WTC11 (cell line): ENCODE measurements at regions of chr7 and their contacts with region 1.

Region 1: GRCh38 chr7:25093268-25093826 is 31.7 kb downstream of the CYCS start:
- DNase-seq: peak; percentile 88
- ATAC-seq: peak; percentile 84
- H3K4me3 Mint-ChIP-seq: no peak overlapping the region
- H3K27ac Mint-ChIP-seq: no peak overlapping the region; the same call in 1 of the 2 replicates
- H3K4me1 Mint-ChIP-seq: peaks cover 8% of the 10 kb centered on the region
- H3K27me3 Mint-ChIP-seq: no peaks in the 10 kb centered on the region; the same call in 1 of the 2 replicates
- CTCF ChIP-seq: peak; percentile 49; the same call in 1 of the 2 replicates

Region 2: DNA sequence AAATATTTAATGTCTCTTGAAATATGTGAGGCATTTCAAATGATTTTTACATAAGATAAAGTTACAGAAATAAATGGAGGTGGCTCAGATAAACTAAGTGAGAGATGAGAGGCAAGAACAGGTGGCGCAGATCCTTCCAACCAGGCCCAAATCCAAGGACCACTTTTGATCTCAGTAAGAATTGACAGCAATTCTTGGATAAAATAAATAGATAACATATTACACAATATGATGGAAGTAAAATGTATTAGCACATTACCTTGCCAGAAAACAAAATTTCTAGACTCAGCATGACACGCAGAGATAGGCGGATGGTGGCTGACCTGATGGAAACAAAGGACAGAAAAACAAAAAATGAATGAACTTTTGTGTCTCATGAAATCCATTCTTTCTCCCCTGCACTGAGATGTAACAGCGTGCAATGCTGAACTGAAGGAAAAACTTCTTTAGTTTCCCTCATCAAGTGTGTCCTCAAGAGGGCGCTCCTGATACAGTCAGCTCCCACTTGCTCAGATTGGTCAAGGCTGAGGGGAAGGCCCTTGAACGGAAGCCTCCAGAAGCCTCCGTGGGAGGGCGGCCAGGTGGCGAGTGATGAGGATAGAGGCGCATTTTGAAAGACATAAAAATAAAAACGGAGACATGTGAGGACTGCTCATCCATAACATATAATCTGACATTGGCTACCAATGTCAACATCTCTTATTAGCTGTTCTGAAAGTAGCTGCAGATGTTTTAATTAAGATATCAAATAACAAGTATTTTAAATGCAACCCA is 273.2 kb before region 1 on chr7:
- CTCF ChIA-PET with region 1: interaction called, 28 read pairs
- POLR2A ChIA-PET with region 1: no interaction called
- DNase-seq: peak; percentile 80
- ATAC-seq: peak; percentile 99
- H3K4me3 Mint-ChIP-seq: no peak overlapping the region
- H3K27ac Mint-ChIP-seq: no peak overlapping the region
- H3K4me1 Mint-ChIP-seq: peaks cover 9% of the 10 kb centered on the region
- H3K27me3 Mint-ChIP-seq: no peaks in the 10 kb centered on the region
- CTCF ChIP-seq: peak; percentile 71; the same call in 1 of the 2 replicates

Region 3: GRCh38 chr7:24825931-24826661 is 267.3 kb before region 1 on chr7:
- CTCF ChIA-PET with region 1: interaction called, 28 read pairs
- POLR2A ChIA-PET with region 1: no interaction called
- DNase-seq: no peak
- ATAC-seq: peak; percentile 81
- H3K4me3 Mint-ChIP-seq: no peak overlapping the region
- H3K27ac Mint-ChIP-seq: peak overlapping the region; percentile 34; the same call in 1 of the 2 replicates
- H3K4me1 Mint-ChIP-seq: no peaks in the 10 kb centered on the region
- H3K27me3 Mint-ChIP-seq: no peaks in the 10 kb centered on the region
- CTCF ChIP-seq: no peak

Region 4: GRCh38 chr7:24877790-24878311 is 215.5 kb before region 1 on chr7:
- CTCF ChIA-PET with region 1: interaction called, 30 read pairs
- POLR2A ChIA-PET with region 1: no interaction called
- DNase-seq: no peak
- ATAC-seq: peak; percentile 43
- H3K4me3 Mint-ChIP-seq: peak overlapping the region; percentile 41
- H3K27ac Mint-ChIP-seq: peak overlapping the region; percentile 86
- H3K4me1 Mint-ChIP-seq: peaks cover 76% of the 10 kb centered on the region
- H3K27me3 Mint-ChIP-seq: no peaks in the 10 kb centered on the region
- CTCF ChIP-seq: no peak

Region 5: GRCh38 chr7:24979863-24980533 is 113.3 kb before region 1 on chr7 and contains the start of gene OSBPL3:
- CTCF ChIA-PET with region 1: interaction called, 41 read pairs
- POLR2A ChIA-PET with region 1: interaction called, 6 read pairs
- DNase-seq: peak; percentile 93
- ATAC-seq: peak; percentile 82
- H3K4me3 Mint-ChIP-seq: peak within 1 kb of the TSS; percentile 86
- H3K27ac Mint-ChIP-seq: peak within 1 kb of the TSS; percentile 94
- H3K4me1 Mint-ChIP-seq: peaks cover 62% of the 10 kb centered on the region
- H3K27me3 Mint-ChIP-seq: peaks cover 47% of the 10 kb centered on the region
- CTCF ChIP-seq: no peak
- total RNA-seq, gene OSBPL3: 16.0 to 20.2 TPM (median 17.1 TPM) in 3 replicates

Region 6: GRCh38 chr7:25025218-25025671 is 68.1 kb before region 1 on chr7:
- CTCF ChIA-PET with region 1: interaction called, 11 read pairs
- POLR2A ChIA-PET with region 1: no interaction called
- DNase-seq: no peak
- ATAC-seq: no peak
- H3K4me3 Mint-ChIP-seq: no peak overlapping the region
- H3K27ac Mint-ChIP-seq: no peak overlapping the region
- H3K4me1 Mint-ChIP-seq: peaks cover 38% of the 10 kb centered on the region
- H3K27me3 Mint-ChIP-seq: peaks cover 6% of the 10 kb centered on the region; the same call in 1 of the 2 replicates
- CTCF ChIP-seq: no peak

Region 7: GRCh38 chr7:25069900-25070443 is 23.4 kb before region 1 on chr7:
- CTCF ChIA-PET with region 1: interaction called, 22 read pairs
- POLR2A ChIA-PET with region 1: no interaction called
- DNase-seq: peak; percentile 39
- ATAC-seq: peak; percentile 92
- H3K4me3 Mint-ChIP-seq: peak overlapping the region; percentile 51
- H3K27ac Mint-ChIP-seq: no peak overlapping the region; the same call in 1 of the 2 replicates
- H3K4me1 Mint-ChIP-seq: peaks cover 17% of the 10 kb centered on the region
- H3K27me3 Mint-ChIP-seq: no peaks in the 10 kb centered on the region
- CTCF ChIP-seq: peak; percentile 85